Common myeloid progenitor, CD34-positive (primary cell): ENCODE measurements at regions of chr7 and their contacts with region 1.

Region 1: GRCh38 chr7:107563775-107564552 is at the starts of genes COG5 and DUS4L:
- DNase-seq: peak; percentile 86 to 92 (median 89)
- H3K4me3 ChIP-seq: peak within 1 kb of the TSS; percentile 72 to 99 (median 96)
- H3K27ac ChIP-seq: peak within 1 kb of the TSS; percentile 67 to 89
- H3K4me1 ChIP-seq: peaks cover 25 to 51% (median 37%) of the 10 kb centered on the region in 4 experiments
- H3K27me3 ChIP-seq: no peaks in the 10 kb centered on the region

Region 2: GRCh38 chr7:107579885-107580715 is 16.1 kb after region 1 on chr7 and contains the start of gene BCAP29:
- CTCF ChIA-PET with region 1: interaction called, 12 read pairs
- POLR2A ChIA-PET with region 1: interaction called, 3 read pairs
- DNase-seq: peak; percentile 68 to 86 (median 81)
- H3K4me3 ChIP-seq: peak within 1 kb of the TSS; percentile 85 to 95 (median 89)
- H3K27ac ChIP-seq: peak within 1 kb of the TSS; percentile 66 to 89
- H3K4me1 ChIP-seq: peaks cover 0 to 19% (median 13%) of the 10 kb centered on the region in 4 experiments
- H3K27me3 ChIP-seq: no peaks in the 10 kb centered on the region